ENCODE measurements at regions of chr15 and their contacts with region 1.

Region 1: GRCh38 chr15:77543159-77543882 is 89.4 kb downstream of the LINGO1 start:
- DNase-seq: peak; percentile 91 to 98 (median 96)
- ATAC-seq: peak; percentile 89 to 91
- H3K4me3 ChIP-seq: no peak overlapping the region
- H3K27ac ChIP-seq: no peak overlapping the region
- H3K4me1 ChIP-seq: peaks cover 11% of the 10 kb centered on the region
- H3K27me3 ChIP-seq: no peaks in the 10 kb centered on the region

Region 2: GRCh38 chr15:77024271-77025082 is 518.8 kb before region 1 on chr15:
- intact Hi-C with region 1: loop called in 1 of 4 experiments (anchors 10 kb)
- DNase-seq: peak; percentile 66 to 91 (median 85)
- ATAC-seq: peak; percentile 48 to 57
- H3K4me3 ChIP-seq: no peak overlapping the region
- H3K27ac ChIP-seq: no peak overlapping the region
- H3K4me1 ChIP-seq: no peaks in the 10 kb centered on the region
- H3K27me3 ChIP-seq: no peaks in the 10 kb centered on the region

Region 3: DNA sequence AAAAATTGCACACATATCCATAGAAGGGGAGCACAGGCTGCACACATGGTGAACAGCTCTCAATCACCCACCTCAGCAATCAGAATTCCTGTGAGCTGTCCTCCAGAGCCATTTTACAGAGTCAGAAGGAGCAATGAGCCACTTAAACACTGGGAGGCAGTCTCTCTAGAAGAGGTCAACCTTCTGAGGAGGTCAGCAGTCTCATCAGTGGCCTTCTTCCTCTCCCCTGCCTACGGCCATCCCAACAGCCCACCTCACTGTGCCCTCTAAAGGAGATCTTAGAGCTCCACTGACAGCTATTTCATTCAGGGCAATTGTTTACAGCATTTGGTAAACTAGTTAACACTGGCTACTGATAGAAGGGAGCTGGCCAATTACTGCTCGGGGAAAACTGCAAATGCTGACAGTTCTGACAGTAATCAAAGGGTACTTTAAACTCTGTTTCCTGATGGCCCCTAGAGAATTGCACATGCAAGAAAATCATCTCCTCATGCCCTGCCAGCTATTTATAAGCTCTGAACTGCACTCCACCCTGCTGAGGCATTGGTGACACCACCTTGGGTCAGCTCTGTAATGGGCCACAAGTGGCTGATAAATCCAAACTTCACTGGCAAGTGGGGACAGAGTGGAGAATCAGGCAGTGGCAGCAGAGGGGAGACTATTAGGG is 430.4 kb before region 1 on chr15:
- intact Hi-C with region 1: loop called in 2 of 4 experiments (anchors 5 kb)
- DNase-seq: no peak
- ATAC-seq: peak in 1 of 2 donors; percentile 40
- H3K4me3 ChIP-seq: no peak overlapping the region
- H3K27ac ChIP-seq: no peak overlapping the region
- H3K4me1 ChIP-seq: peaks cover 4% of the 10 kb centered on the region
- H3K27me3 ChIP-seq: no peaks in the 10 kb centered on the region

Region 4: DNA sequence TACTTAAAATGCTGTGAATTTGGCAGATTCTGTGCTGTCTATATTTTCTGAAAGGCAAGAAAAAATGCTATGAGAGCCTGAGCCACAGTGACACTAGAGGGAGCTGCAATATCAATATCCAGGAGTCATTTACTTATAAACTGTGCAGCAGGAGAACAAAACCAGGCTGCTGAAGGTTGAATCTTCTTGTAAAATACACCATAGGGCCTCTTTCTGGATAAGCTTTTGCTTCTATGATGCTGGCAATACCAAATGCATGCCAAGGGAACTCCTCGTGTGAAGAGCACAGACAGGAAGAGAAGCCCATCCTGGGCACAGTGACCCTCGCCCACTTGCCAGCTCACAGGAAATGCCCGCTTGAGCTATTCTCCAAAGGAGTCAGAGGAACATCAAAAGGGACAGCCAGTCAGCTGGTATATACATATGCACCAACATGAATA is 424.4 kb before region 1 on chr15:
- intact Hi-C with region 1: loop called in 3 of 4 experiments (anchors 5 kb)
- DNase-seq: no peak
- ATAC-seq: peak; percentile 75
- H3K4me3 ChIP-seq: no peak overlapping the region
- H3K27ac ChIP-seq: no peak overlapping the region
- H3K4me1 ChIP-seq: no peaks in the 10 kb centered on the region
- H3K27me3 ChIP-seq: no peaks in the 10 kb centered on the region

Region 5: DNA sequence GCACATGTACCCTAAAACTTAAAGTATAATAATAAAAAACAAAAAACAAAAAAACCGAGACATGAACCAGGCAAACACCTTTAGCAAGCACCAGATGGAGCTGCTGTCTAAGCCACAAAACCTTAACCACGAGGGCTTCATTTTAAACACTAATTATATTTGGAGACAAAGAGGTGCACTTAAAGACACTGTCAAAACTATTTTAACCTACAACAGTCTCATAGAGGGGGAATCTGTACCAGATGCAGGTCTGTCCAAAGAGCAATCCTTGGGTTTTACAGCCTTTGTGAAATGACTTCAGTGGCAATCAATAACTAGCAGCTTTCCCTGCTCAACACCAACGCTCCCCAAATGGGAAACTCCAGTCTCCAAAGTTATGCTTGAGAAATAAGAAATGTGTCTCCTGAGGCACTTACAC is 356.7 kb before region 1 on chr15:
- intact Hi-C with region 1: loop called (anchors 2 to 10 kb)
- DNase-seq: no peak
- ATAC-seq: peak; percentile 22 to 38
- H3K4me3 ChIP-seq: no peak overlapping the region
- H3K27ac ChIP-seq: no peak overlapping the region
- H3K4me1 ChIP-seq: peaks cover 10% of the 10 kb centered on the region
- H3K27me3 ChIP-seq: no peaks in the 10 kb centered on the region

Region 6: DNA sequence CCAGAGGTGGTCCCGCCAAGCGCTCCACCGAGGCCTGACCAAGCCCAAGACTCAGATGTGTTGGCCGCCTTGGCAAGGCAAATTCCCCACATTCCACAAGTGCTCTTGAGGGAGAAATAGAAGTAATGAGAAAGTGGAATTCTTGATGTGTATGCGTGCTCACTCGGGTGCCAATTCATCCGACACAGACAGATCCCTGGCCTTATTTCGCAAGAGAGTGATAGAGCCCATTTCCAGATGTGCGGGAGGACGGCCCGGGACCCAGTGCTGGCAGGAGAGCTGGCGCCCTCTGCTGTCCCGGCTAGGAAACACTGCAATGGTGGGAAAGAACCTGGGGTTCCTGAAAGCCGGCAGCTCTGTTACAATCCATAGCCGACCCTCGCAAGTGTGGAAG is 46.6 kb before region 1 on chr15:
- intact Hi-C with region 1: loop called in 1 of 4 experiments (anchors 5 kb)
- DNase-seq: peak; percentile 89 to 96 (median 94)
- ATAC-seq: peak; percentile 88 to 89
- H3K4me3 ChIP-seq: no peak overlapping the region
- H3K27ac ChIP-seq: peak overlapping the region; percentile 99
- H3K4me1 ChIP-seq: peaks cover 26% of the 10 kb centered on the region
- H3K27me3 ChIP-seq: no peaks in the 10 kb centered on the region

Region 7: GRCh38 chr15:77659350-77660321 is 116.3 kb after region 1 on chr15:
- intact Hi-C with region 1: no loop called
- DNase-seq: peak; percentile 50 to 78 (median 78)
- ATAC-seq: peak; percentile 52 to 54
- H3K4me3 ChIP-seq: no peak overlapping the region
- H3K27ac ChIP-seq: no peak overlapping the region
- H3K4me1 ChIP-seq: no peaks in the 10 kb centered on the region
- H3K27me3 ChIP-seq: no peaks in the 10 kb centered on the region

Measured in right cardiac atrium (tissue), 5 donors.